MCF 10A (cell line): ENCODE measurements at regions of chr15 and their contacts with region 1.

Region 1: DNA sequence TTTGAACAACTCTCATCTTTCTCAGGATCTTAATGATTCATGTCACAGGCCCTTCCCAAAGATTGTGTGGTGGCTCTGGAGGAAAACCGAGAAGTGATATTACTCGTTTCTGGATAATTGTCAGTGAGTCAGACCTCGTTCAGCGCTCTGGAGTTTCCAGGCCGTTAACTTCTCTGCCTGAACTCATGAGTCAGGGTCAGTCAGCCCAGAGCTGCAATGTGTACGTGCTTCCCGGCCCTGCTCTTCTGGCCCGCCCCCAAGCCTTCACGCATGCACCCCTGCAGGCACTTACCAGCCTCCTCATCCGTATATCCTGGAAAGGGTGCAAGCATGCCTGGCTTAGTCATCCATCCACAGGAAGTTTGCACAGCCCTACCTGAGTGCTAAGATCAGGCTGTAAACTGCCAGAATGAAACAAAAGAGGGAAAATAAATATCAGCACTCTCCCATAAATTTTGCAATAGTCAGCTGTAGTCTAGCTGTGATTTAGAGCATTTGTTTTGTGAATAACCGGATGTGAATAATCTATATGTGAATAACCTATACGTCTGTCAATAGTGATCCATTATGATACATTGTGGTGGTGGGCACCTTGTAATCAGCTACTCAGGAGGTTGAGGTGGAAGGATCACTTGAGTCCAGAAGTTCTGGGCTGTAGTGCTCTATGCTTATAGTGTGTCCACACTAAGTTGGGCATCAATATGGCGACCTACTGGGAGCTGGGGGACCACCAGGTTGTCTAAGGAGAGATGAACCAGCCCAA is 35.3 kb upstream of the SEMA4B start:
- DNase-seq: peak; percentile 99
- H3K4me3 Mint-ChIP-seq: peak overlapping the region; percentile 25
- H3K27ac Mint-ChIP-seq: peak overlapping the region; percentile 66
- H3K4me1 Mint-ChIP-seq: peaks cover 30% of the 10 kb centered on the region
- H3K27me3 Mint-ChIP-seq: no peaks in the 10 kb centered on the region
- CTCF ChIP-seq: no peak

Region 2: DNA sequence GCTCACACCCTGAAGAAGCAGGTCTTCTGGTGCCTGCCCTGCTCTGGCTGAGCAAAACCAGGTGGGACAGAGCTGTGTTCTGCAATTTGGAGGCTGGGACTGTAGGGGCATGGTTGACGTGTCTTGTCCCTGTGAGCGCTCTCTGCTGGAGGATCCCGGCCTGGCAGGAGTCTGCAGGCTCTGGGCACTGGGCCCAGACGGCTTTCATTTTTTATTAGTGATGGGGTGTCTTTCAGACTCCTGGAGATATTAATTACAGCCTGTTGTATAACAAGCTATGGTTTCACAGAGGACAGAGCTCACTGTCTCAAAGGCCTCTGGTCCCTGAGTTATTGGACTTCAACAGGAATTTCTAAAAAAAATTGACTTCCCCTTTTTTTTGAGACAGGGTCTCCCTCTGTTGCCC is 194.2 kb before region 1 on chr15:
- CTCF ChIA-PET with region 1: no interaction called
- POLR2A ChIA-PET with region 1: no interaction called
- intact Hi-C with region 1: no loop called
- DNase-seq: peak; percentile 76
- H3K4me3 Mint-ChIP-seq: no peak overlapping the region
- H3K27ac Mint-ChIP-seq: no peak overlapping the region
- H3K4me1 Mint-ChIP-seq: no peaks in the 10 kb centered on the region
- H3K27me3 Mint-ChIP-seq: no peaks in the 10 kb centered on the region
- CTCF ChIP-seq: peak; percentile 52

Region 3: DNA sequence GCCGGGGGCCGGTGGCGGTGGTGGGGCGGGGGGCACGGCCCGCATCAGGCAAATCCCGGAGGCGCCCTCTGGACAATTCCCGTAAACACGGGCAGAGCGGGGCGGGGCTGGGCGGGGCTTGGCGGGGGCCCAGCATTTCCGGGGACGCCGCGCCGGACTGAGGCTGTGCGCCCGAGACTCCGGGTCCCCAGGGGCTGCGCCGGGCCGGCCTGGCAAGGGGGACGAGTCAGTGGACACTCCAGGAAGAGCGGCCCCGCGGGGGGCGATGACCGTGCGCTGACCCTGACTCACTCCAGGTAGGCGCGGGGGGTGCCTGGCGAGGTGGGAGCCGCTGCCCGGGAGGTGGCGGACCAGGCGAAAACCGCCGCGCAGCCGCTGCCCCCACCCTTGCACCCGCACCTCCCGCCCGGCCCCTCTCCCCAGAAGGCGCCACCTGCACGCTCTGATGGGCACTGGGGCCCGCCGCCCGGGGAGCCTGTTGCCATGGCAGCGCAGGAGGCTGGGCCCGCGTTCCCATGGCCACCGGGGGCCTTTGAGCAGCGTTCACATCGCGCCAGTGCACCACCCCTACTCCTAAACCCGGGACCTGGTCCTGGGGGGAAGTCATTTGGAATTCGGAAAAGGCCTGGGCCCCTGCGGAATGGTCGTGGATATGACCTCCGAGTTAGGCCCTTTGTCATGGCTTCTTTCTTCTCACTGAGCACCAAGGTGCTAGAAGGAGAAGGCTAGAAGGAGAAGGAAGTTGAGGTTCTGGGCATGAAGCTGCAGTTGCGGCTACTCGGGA is 19.1 kb after region 1 on chr15:
- CTCF ChIA-PET with region 1: interaction called, 5 read pairs
- POLR2A ChIA-PET with region 1: interaction called, 98 read pairs
- intact Hi-C with region 1: no loop called
- DNase-seq: peak; percentile 84
- H3K4me3 Mint-ChIP-seq: peak overlapping the region; percentile 88
- H3K27ac Mint-ChIP-seq: peak overlapping the region; percentile 89
- H3K4me1 Mint-ChIP-seq: peaks cover 22% of the 10 kb centered on the region
- H3K27me3 Mint-ChIP-seq: no peaks in the 10 kb centered on the region
- CTCF ChIP-seq: no peak

Region 4: GRCh38 chr15:90191794-90192509 is 26.1 kb after region 1 on chr15:
- CTCF ChIA-PET with region 1: interaction called, 6 read pairs
- POLR2A ChIA-PET with region 1: interaction called, 98 read pairs
- intact Hi-C with region 1: no loop called
- DNase-seq: peak; percentile 92
- H3K4me3 Mint-ChIP-seq: peak overlapping the region; percentile 58
- H3K27ac Mint-ChIP-seq: peak overlapping the region; percentile 88
- H3K4me1 Mint-ChIP-seq: peaks cover 31% of the 10 kb centered on the region
- H3K27me3 Mint-ChIP-seq: no peaks in the 10 kb centered on the region
- CTCF ChIP-seq: no peak

Region 5: DNA sequence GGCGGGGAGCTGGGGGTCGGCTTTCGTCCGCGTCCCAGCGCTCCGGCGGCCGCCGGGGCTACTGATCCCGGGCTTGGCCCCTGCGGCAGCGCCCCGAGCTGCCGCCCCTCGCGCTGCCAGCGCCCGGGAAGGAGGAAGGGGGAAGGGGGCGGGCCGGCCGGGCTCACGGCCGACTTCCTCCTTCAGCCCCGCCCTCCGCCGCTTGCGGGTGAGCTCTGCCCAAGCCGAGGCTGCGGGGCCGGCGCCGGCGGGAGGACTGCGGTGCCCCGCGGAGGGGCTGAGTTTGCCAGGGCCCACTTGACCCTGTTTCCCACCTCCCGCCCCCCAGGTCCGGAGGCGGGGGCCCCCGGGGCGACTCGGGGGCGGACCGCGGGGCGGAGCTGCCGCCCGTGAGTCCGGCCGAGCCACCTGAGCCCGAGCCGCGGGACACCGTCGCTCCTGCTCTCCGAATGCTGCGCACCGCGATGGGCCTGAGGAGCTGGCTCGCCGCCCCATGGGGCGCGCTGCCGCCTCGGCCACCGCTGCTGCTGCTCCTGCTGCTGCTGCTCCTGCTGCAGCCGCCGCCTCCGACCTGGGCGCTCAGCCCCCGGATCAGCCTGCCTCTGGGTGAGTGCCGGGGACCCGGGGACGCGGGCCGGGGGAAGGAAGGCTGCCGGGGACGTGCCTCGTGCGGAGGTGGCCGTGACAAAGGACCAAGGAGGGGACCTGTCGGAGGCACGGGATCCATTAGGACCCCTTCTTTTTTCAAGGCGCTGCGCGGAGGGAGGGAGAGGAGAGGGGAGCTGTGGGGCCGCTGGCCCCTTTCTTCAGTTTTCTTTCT is 35.5 kb after region 1 on chr15 and contains the start of gene SEMA4B:
- CTCF ChIA-PET with region 1: interaction called, 3 read pairs
- POLR2A ChIA-PET with region 1: interaction called, 23 read pairs
- intact Hi-C with region 1: no loop called
- DNase-seq: peak; percentile 51
- H3K4me3 Mint-ChIP-seq: peak within 1 kb of the TSS; percentile 78
- H3K27ac Mint-ChIP-seq: no peak within 1 kb of the TSS
- H3K4me1 Mint-ChIP-seq: peaks cover 27% of the 10 kb centered on the region
- H3K27me3 Mint-ChIP-seq: no peaks in the 10 kb centered on the region
- CTCF ChIP-seq: no peak
- total RNA-seq, gene SEMA4B: 38.6 and 46.4 TPM in 2 replicates